PC-9 (cell line): ENCODE measurements at regions of chr22 and their contacts with region 1.

Region 1: DNA sequence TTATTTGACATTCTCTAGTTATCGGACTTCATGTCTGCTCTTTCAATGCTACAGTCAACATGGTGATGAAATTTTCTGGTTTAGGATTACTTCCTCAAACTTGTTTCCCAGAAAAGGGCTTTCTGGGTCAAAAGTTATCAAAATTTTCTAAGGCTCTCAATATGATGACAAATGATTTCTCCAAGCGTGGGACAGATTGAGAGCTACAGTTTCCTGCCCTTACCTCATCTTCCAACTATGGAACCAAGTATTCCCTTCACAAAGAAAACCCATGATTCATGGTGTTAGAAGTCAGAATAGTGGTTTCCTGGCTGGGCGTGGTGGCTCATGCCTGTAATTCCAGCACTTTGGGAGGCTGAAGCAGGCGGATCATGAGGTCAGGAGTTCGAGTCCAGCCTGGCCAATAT is 17.8 kb downstream of the MYO18B start:
- DNase-seq: peak; percentile 66 to 92
- H3K4me3 ChIP-seq: no peak overlapping the region
- H3K27ac ChIP-seq: peak overlapping the region; percentile 70
- H3K4me1 ChIP-seq: peaks cover 10% of the 10 kb centered on the region
- H3K27me3 ChIP-seq: no peaks in the 10 kb centered on the region
- CTCF ChIP-seq: no peak

Region 2: DNA sequence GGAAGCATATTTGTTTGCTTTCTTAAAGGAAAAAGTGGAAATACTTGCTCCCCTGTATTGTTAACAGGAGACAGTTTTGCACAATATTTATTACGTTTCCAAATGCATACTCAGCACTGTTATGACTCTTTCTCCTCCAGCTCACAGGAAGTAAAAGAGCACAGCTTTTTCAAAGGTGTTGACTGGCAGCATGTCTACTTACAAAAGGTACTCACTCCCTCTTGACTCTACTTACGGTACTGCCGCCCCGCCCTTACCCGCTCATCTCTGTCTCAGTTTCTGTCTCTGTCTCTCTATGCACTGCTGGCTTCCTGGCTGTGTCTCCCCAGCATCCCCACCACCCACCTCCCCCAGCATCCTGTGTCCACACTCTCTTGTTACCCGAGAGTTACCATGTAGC is 50.1 kb before region 1 on chr22:
- CTCF ChIA-PET with region 1: interaction called, 14 read pairs
- POLR2A ChIA-PET with region 1: no interaction called
- intact Hi-C with region 1: no loop called
- DNase-seq: no peak
- H3K4me3 ChIP-seq: no peak overlapping the region
- H3K27ac ChIP-seq: no peak overlapping the region
- H3K4me1 ChIP-seq: no peaks in the 10 kb centered on the region
- H3K27me3 ChIP-seq: peaks cover 13% of the 10 kb centered on the region; the same call in 1 of the 2 replicates
- CTCF ChIP-seq: no peak

Region 3: DNA sequence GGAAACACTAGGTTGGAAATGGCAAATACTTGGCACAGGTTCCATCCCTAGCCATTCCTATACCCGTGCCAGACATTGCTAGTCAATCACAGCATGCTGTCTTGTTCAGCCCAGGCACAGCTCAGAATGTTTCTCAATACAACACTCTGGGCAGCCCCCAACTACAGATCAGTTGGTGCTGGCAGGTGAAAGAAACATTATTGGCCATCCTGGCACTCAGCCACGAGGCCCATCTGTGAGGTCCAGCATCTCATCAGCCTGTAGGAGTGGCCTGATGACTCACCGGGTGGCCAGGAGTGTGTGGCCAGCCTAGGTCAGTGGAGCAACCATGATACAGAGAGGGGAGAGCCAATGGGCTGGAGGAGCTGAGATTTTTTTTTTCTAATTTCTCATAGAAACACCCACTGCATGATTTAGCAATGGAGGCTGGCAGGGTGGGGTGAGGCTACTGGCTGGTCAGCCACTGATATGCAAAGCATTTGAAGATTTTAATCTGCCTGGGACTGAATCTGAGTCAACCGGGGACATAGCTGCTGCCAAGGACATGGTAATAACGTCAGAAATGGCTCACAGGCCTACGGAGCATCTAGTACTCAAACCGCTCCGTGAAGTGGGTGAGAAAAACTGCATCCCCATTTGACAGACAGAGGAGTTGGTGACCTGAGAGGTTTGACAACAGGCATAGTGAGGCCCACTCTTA is 12.4 kb before region 1 on chr22:
- CTCF ChIA-PET with region 1: no interaction called
- POLR2A ChIA-PET with region 1: no interaction called
- intact Hi-C with region 1: loop called (anchors 1 kb)
- DNase-seq: peak; percentile 88 to 89
- H3K4me3 ChIP-seq: no peak overlapping the region
- H3K27ac ChIP-seq: peak overlapping the region; percentile 65
- H3K4me1 ChIP-seq: peaks cover 20% of the 10 kb centered on the region
- H3K27me3 ChIP-seq: no peaks in the 10 kb centered on the region
- CTCF ChIP-seq: no peak